Caco-2 (cell line): ENCODE measurements at regions of chr5 and their contacts with region 1.

Region 1: DNA sequence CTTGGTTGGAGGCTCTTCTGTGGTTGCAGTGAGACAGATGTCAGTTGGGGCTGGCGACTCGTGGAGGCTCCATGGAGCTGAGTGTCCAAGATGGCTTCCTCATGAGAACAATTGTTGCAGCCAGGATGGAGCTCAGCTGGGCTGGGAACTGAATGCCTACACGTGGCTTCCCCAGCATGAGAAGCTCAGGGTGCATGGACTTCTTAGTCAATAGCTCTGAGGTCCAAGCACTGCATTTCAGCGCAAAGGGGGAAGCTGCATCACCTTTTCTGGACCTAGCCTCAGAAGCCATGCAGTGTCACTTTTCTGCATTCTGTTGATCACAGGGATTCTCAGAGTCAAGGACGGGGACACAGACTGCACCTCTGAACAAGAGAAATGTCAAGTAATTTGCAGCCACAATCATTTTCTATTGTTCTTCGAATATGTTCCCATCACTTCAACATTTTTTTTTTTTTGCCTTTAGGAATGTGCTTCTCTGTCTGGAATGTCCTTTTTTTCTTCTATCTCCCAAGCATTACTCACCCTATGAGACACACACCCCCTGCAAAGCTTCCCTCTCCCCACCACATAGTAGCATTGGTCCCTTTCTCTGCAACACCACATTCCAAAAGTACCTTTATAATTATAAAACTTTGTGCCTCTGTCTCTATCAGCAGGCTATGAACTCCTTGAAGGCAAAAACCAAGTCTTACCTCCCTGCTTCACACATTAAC is 57.5 kb upstream of the STK32A start:
- DNase-seq: peak in 1 of 2 experiments; percentile 40
- H3K4me3 ChIP-seq: no peak overlapping the region
- H3K4me3 Mint-ChIP-seq: peak overlapping the region; percentile 53
- H3K27ac Mint-ChIP-seq: peak overlapping the region; percentile 78
- H3K4me1 ChIP-seq: peaks cover 71% of the 10 kb centered on the region
- H3K4me1 Mint-ChIP-seq: peaks cover 55% of the 10 kb centered on the region
- H3K27me3 ChIP-seq: no peaks in the 10 kb centered on the region
- H3K27me3 Mint-ChIP-seq: no peaks in the 10 kb centered on the region
- CTCF ChIP-seq: no peak

Region 2: DNA sequence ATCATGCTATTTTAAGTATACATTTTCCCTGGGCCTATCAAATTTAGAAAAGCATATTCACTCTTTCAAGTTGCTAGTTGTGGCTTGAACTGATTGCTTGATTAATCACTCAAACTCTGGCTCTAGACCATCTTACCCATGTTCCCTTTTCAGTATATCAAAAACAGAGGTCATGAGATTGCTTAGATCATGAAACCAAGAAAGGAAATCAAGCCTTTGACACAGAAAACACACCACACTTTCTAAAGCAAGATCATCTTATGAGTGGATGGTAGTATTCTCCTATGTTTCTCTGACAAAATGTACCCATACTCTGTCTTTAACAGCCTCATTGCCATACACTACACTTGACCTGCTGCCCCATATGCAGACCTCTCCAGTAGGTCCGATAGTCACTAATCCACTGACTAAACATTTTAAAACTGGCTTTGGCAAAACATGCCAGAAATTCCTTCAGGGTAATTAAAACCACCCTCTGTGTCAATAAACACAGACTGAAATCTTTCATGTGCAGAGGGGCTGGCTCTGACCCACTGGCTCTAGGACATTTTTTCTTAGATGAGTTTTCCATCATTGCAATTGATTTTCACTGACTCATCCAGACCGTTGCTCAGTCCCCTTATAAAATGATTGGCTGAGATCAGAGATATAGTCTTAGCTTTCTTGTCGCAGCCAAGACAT is 316.9 kb before region 1 on chr5:
- CTCF ChIA-PET with region 1: no interaction called
- POLR2A ChIA-PET with region 1: no interaction called
- intact Hi-C with region 1: loop called (anchors 5 kb)
- DNase-seq: peak; percentile 57 to 69
- H3K4me3 ChIP-seq: no peak overlapping the region
- H3K4me3 Mint-ChIP-seq: peak overlapping the region; percentile 34
- H3K27ac Mint-ChIP-seq: peak overlapping the region; percentile 76
- H3K4me1 ChIP-seq: peaks cover 20% of the 10 kb centered on the region
- H3K4me1 Mint-ChIP-seq: peaks cover 25% of the 10 kb centered on the region
- H3K27me3 ChIP-seq: no peaks in the 10 kb centered on the region
- H3K27me3 Mint-ChIP-seq: no peaks in the 10 kb centered on the region
- CTCF ChIP-seq: no peak